ENCODE measurements at regions of chr2 and their contacts with region 1.

Region 1: GRCh38 chr2:149597668-149598326 is 10.2 kb upstream of the MMADHC start:
- DNase-seq: peak in 1 of 3 donors; percentile 57
- ATAC-seq: peak; percentile 90
- H3K4me3 ChIP-seq: no peak overlapping the region
- H3K4me1 ChIP-seq: no peaks in the 10 kb centered on the region
- CTCF ChIP-seq: peak; percentile 59

Region 2: DNA sequence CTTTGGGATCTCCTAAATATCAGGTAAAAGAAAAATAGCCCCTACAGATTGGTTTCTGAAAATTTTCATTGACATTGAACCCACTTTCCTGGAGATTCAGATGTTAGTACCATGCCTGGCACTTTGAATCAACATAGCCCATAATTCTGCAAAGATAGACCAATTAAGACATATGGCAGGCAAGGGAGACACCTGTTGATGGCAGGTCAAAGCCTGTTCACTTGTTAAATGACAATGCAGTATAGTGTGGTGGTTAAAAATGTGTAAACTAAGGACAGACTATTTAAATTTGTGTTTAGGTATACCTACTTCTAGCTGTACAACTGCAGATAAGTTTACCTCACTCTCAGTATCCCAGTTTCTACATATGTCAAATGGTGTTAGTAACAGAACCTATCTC is 167.8 kb after region 1 on chr2:
- intact Hi-C with region 1: no loop called
- DNase-seq: peak in 1 of 3 donors; percentile 19
- ATAC-seq: peak; percentile 47
- H3K4me3 ChIP-seq: no peak overlapping the region
- H3K4me1 ChIP-seq: peaks cover 2% of the 10 kb centered on the region
- CTCF ChIP-seq: no peak

Region 3: GRCh38 chr2:150487537-150488429 is 890.0 kb after region 1 on chr2 and contains the start of gene RND3:
- intact Hi-C with region 1: loop called in 1 of 2 experiments (anchors 10 kb)
- DNase-seq: peak; percentile 93 to 99 (median 95)
- ATAC-seq: peak; percentile 76
- H3K4me3 ChIP-seq: peak within 1 kb of the TSS; percentile 74
- H3K4me1 ChIP-seq: peaks cover 21% of the 10 kb centered on the region
- CTCF ChIP-seq: peak; percentile 69
- total RNA-seq, gene RND3: 42.2 to 80.1 (median 57.5) TPM

Region 4: DNA sequence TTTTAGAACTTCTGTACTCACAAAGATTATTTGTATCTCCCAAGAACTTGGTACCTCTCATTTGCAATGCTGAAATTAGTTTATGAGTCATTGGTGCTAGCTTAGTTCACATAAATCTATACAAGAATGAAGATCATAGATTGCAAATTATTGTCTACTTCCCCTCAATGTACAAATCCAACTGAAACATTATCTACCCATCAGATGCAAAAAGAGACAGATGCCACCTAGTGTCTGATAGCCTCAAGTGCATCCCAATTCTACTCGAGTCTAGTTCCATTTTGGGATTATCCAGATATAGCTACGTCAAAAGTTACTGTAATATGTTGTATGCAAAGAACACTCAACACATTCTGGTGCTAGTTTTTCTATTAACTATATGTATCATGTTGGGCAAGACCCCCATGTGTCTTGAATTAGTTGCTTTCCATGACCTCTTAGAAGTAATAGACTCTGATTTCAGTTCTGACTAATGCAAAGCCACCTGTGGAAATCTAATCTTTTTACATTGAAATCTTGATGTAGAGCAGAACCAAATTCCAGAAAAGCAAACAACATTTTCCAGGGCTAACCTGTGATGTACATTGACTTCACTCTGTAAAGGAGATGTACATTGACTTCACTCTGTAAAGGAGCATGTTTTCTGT is 1453.9 kb after region 1 on chr2:
- intact Hi-C with region 1: loop called (anchors 10 kb)
- DNase-seq: peak in 1 of 3 donors; percentile 54
- ATAC-seq: peak; percentile 36
- H3K4me3 ChIP-seq: no peak overlapping the region
- H3K4me1 ChIP-seq: no peaks in the 10 kb centered on the region
- CTCF ChIP-seq: peak; percentile 32

Region 5: DNA sequence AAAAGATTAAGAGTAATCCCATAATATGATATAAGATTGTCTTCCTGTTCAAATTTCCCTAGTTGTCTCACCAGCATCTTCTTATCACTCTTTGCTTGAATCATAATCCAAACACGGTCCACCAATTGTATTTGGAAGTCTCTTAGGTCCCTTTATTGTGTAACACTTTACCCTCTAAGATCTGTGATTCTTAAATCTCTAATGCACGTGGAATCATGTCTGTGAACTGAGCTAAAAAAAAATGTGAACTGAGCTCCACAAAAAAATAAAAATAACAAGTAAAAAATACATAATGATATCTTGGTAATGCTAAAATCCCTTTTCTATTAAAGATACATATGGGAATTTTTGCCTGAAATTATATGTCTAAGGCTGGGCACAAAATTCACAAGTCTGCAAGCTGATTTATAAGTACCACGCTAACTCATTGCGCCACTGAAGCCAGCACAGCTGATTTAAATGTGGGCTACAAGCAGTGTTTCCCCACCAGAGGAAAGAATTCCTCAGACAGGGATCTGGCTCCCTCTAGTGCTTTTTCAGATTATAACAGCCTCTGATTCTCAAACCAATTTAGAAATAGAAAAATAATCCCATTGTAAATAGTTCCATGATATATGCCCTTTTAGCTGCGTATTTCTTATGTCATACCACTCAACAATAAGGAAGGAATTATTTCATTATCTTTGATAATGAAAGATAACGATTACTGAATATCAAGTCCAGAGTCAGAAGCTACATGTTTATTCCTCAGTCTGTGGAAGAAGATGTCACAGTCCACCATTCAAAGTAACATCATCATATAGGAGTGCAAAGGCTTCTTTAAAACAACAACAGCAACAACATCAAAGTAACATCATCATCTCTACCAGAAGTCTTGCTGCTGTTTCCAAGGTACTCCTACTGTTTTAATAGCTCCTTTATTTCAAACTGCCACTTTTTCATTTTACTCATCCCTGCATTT is 1641.0 kb after region 1 on chr2:
- intact Hi-C with region 1: loop called in 1 of 2 experiments (anchors 10 kb)
- DNase-seq: peak in 1 of 3 donors; percentile 48
- ATAC-seq: peak; percentile 70
- H3K4me3 ChIP-seq: no peak overlapping the region
- H3K4me1 ChIP-seq: no peaks in the 10 kb centered on the region
- CTCF ChIP-seq: peak; percentile 52

Measured in mucosa of descending colon (tissue), 3 donors.